ENCODE measurements at regions of chr6 and their contacts with region 1.

Region 1: GRCh38 chr6:33248925-33249731 is 22.5 kb downstream of the VPS52 start:
- DNase-seq: peak; percentile 97
- ATAC-seq: peak; percentile 95
- H3K4me3 Mint-ChIP-seq: peak overlapping the region; percentile 86
- H3K27ac Mint-ChIP-seq: peak overlapping the region; percentile 87
- H3K4me1 Mint-ChIP-seq: peaks cover 18% of the 10 kb centered on the region
- H3K27me3 Mint-ChIP-seq: peaks cover 26% of the 10 kb centered on the region
- CTCF ChIP-seq: no peak

Region 2: DNA sequence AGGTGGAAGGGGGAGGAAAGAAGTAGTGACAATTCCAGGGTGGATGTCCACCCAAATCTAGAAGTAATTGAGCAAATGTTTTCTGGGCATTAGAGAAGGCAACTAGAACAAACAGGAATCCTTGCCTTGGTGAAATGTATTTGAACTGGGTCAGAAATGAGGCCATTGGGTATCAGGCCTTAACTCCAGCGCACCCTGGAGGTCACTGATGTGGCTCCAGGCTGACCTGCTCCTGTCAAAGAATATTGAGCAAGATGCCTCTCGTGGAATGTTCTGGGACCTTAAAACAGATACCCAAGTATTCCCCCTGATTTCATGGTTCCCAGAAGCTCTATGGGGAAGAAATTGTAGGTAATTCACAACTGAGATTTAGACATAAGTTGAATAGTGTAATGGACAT is 166.4 kb before region 1 on chr6:
- CTCF ChIA-PET with region 1: interaction called, 10 read pairs
- POLR2A ChIA-PET with region 1: no interaction called
- DNase-seq: peak; percentile 51
- ATAC-seq: peak; percentile 38
- H3K4me3 Mint-ChIP-seq: peak overlapping the region; percentile 9; the same call in 1 of the 2 replicates
- H3K27ac Mint-ChIP-seq: peak overlapping the region; percentile 51; the same call in 1 of the 2 replicates
- H3K4me1 Mint-ChIP-seq: peaks cover 31% of the 10 kb centered on the region
- H3K27me3 Mint-ChIP-seq: peaks cover 18% of the 10 kb centered on the region
- CTCF ChIP-seq: peak; percentile 26; the same call in 1 of the 2 replicates

Region 3: GRCh38 chr6:33161354-33162331 is 87.5 kb before region 1 on chr6:
- CTCF ChIA-PET with region 1: interaction called, 21 read pairs
- POLR2A ChIA-PET with region 1: no interaction called
- DNase-seq: peak; percentile 86
- ATAC-seq: peak; percentile 83
- H3K4me3 Mint-ChIP-seq: peak overlapping the region; percentile 86
- H3K27ac Mint-ChIP-seq: no peak overlapping the region
- H3K4me1 Mint-ChIP-seq: peaks cover 22% of the 10 kb centered on the region
- H3K27me3 Mint-ChIP-seq: peaks cover 25% of the 10 kb centered on the region
- CTCF ChIP-seq: peak; percentile 86

Region 4: GRCh38 chr6:33192671-33193602 is 56.2 kb before region 1 on chr6:
- CTCF ChIA-PET with region 1: interaction called, 20 read pairs
- POLR2A ChIA-PET with region 1: no interaction called
- DNase-seq: peak; percentile 41
- ATAC-seq: peak; percentile 39
- H3K4me3 Mint-ChIP-seq: peak overlapping the region; percentile 84
- H3K27ac Mint-ChIP-seq: no peak overlapping the region
- H3K4me1 Mint-ChIP-seq: peaks cover 15% of the 10 kb centered on the region
- H3K27me3 Mint-ChIP-seq: peaks cover 26% of the 10 kb centered on the region
- CTCF ChIP-seq: no peak

Region 5: GRCh38 chr6:33208091-33208967 is 40.8 kb before region 1 on chr6 and contains the start of gene RING1:
- CTCF ChIA-PET with region 1: interaction called, 83 read pairs
- POLR2A ChIA-PET with region 1: interaction called, 4 read pairs
- DNase-seq: peak; percentile 89
- ATAC-seq: peak; percentile 3
- H3K4me3 Mint-ChIP-seq: peak within 1 kb of the TSS; percentile 90
- H3K27ac Mint-ChIP-seq: peak within 1 kb of the TSS; percentile 66; the same call in 1 of the 2 replicates
- H3K4me1 Mint-ChIP-seq: peaks cover 51% of the 10 kb centered on the region
- H3K27me3 Mint-ChIP-seq: peaks cover 43% of the 10 kb centered on the region
- CTCF ChIP-seq: no peak
- total RNA-seq, gene RING1: 26.6 to 30.2 TPM (median 27.8 TPM) in 3 replicates

Region 6: DNA sequence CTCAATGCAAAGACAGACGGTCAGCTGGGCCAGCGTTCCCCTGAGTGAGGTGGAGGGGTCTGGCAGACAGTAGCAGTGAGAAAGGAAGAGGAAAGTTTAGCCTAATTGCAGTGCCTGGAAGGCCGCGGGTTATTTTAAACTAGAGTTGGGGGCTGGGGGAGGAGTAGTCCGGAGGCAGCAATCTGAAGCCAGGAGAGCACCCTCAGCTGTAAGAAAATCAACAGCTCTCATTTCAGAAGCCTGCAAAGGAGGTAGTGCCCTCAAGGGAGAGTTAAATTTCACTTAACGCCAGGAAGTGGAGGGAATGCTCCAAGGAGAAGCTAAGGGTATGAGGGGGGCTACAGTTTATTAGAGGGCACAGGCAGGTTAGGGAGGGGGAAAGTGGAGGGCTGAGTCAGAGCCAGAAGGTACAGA is 13.9 kb before region 1 on chr6:
- CTCF ChIA-PET with region 1: interaction called, 28 read pairs
- POLR2A ChIA-PET with region 1: no interaction called
- DNase-seq: no peak
- ATAC-seq: peak; percentile 71
- H3K4me3 Mint-ChIP-seq: peak overlapping the region; percentile 10
- H3K27ac Mint-ChIP-seq: peak overlapping the region; percentile 77
- H3K4me1 Mint-ChIP-seq: peaks cover 18% of the 10 kb centered on the region
- H3K27me3 Mint-ChIP-seq: peaks cover 27% of the 10 kb centered on the region
- CTCF ChIP-seq: no peak

Region 7: GRCh38 chr6:33276864-33277662 is 27.9 kb after region 1 on chr6 and contains the start of gene B3GALT4:
- CTCF ChIA-PET with region 1: interaction called, 24 read pairs
- POLR2A ChIA-PET with region 1: interaction called, 11 read pairs
- DNase-seq: peak; percentile 89
- ATAC-seq: peak; percentile 74
- H3K4me3 Mint-ChIP-seq: peak within 1 kb of the TSS; percentile 96
- H3K27ac Mint-ChIP-seq: peak within 1 kb of the TSS; percentile 100
- H3K4me1 Mint-ChIP-seq: peaks cover 54% of the 10 kb centered on the region
- H3K27me3 Mint-ChIP-seq: no peaks in the 10 kb centered on the region
- CTCF ChIP-seq: peak; percentile 36
- total RNA-seq, gene B3GALT4: 3.2 to 5.0 TPM (median 4.1 TPM) in 3 replicates

Region 8: DNA sequence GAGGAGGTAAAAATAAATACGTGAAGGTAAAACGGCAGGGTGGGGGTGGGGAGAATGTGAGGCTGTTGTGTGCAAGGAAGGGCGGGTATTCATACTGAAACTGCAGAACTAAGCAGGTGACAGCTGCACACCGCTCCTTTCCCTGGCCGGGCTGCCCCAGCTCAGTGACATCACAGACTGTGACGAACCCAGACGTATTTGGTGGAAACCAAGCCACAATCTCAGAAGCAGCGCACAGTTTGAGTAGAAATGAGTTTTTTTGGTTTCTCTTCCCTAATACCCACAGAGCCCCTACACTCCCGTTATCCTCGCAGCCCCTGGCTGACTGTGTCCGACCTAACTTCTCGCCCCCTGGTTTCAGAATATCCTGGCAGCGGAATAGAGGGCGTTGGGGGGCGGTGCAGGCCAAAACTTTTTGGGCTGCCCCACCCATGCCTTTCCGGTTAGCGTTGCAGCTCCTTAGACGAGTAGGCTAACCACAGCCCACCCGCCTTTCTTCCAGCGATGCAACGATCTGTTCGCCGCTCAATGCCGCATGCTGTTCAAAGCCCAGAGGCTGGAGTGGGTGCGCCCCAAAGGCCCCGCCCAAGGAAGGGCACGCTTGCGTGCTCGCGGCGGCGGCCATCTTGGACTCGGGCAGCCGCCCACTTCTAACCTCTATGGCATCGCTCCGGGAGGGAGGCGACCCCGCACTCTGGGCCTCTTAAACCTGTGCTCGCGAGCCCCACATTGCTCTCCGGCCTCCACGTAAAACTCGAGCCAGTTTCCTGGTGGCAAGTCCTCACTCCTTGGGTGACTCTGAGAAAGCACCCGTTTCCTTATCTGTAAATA is 321.9 kb after region 1 on chr6:
- CTCF ChIA-PET with region 1: no interaction called
- POLR2A ChIA-PET with region 1: no interaction called
- DNase-seq: peak; percentile 76
- ATAC-seq: peak; percentile 94
- H3K4me3 Mint-ChIP-seq: peak overlapping the region; percentile 89
- H3K27ac Mint-ChIP-seq: peak overlapping the region; percentile 81
- H3K4me1 Mint-ChIP-seq: peaks cover 11% of the 10 kb centered on the region
- H3K27me3 Mint-ChIP-seq: peaks cover 3% of the 10 kb centered on the region; the same call in 1 of the 2 replicates
- CTCF ChIP-seq: no peak